ENCODE measurements at regions of chr17 and their contacts with region 1.

Region 1: DNA sequence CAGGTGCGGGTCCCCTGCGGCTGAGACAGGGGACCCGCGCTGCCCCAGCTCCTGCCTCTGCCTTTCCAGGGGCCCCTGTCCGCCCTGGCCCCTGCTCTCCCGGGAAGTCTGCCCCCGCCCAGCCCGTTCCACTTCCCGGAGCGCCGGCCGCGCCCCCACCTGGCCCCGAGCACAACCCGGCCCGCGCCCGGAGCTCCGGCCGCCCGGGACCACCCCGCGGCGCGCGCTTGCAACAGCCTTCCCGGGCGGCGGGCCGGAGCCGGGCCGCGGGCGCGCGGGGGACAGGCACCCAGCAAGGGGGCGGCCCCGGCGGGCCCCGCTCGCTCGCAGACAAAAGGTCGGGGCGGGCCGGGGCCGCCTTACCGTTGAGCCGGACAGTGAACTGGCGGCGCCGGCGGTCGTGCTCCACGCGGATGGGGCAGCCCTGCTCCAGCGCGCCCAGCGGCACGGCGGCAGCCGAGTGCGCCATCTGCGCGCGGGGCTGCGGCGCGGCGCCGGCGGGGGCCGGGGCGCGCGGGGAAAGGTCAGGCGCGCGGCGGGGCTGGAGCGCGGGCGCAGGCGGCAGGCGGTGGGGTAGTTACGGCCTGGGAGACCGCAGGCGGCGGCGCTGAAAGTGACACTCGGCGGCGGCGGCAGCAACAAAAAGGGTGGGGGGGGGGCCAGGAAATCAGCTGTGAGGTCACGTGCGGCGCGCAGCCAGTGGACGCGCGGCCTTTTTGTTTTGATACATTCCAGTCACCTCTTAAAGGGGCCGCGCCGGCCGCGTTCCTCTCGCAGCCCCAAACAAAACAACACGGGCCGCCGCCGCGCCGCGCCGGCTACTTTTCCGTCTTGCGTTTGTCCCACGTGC is at the start of gene NATD1:
- DNase-seq: peak; percentile 97
- ATAC-seq: peak; percentile 78
- total RNA-seq, gene NATD1: 21.4 TPM

Region 2: GRCh38 chr17:21214015-21214776 is 38.8 kb before region 1 on chr17 and contains the start of gene TMEM11:
- intact Hi-C with region 1: loop called (anchors 2 kb)
- DNase-seq: peak; percentile 99
- ATAC-seq: peak; percentile 96
- total RNA-seq, gene TMEM11: 35.3 TPM

Region 3: GRCh38 chr17:21275579-21276263 is 22.7 kb after region 1 on chr17:
- intact Hi-C with region 1: loop called (anchors 1 kb)
- DNase-seq: peak; percentile 98
- ATAC-seq: peak; percentile 97

Region 4: GRCh38 chr17:21295036-21295952 is 42.3 kb after region 1 on chr17:
- intact Hi-C with region 1: no loop called
- DNase-seq: peak; percentile 83
- ATAC-seq: peak; percentile 82

Region 5: DNA sequence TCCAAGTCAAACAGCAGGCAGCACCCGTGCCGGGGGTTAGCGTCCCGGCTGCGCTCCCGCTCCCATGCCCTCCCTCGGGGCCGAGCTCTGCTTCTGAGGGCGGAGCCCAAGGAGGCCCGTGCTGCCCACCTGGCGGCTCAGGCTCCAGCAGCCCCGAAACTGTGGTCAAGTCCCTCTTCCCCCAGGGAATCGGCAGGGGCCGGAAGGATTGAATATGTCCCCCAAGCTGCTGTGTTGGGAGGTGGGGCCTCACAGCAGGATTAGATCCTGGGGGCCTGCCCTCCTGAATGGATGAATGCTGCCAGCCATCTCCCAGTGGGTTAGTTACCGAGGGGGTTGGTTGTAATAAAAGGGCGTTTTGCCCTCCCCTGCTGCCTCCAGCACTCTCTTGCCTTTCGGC is 65.4 kb after region 1 on chr17:
- intact Hi-C with region 1: no loop called
- DNase-seq: peak; percentile 44
- ATAC-seq: no peak

Measured in Right ventricle myocardium inferior (tissue), 1 donor.